ENCODE measurements at regions of chr17 and their contacts with region 1.

Region 1: DNA sequence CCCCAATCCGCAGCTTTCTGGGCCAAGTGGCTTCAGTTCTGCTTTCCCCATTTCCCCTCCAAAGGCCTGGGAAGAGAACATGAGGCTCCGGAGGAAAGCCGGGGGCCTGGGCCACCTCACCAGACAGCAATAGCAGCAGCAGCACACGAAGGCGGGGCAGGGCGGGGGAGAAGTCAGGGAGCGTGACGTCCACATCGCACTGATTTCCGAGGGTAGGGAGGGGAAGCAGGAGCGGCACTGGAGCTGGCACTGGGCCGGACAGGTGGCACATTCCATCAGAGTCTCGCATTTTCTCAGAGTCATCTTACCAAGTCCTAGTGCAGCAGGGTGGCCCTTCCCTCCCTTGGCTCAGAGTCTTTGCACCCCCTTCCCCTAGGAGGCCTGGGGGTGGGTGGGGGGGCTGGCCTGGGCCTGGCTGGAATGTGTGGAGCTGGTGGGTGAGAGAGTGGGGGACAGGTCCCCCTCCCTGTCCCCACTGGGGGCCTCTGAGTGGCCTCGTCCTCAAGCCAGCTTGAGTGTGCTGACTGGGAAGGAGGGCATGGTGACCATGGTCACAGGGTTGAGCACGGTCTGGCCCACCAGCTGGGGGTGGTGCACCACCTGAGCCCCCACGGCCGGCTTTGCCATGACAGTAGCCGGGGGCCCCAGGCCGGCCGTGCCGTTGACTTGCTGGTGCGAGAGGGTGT is 14.3 kb downstream of the MNT start:
- DNase-seq: no peak
- H3K4me3 ChIP-seq: no peak overlapping the region
- H3K27ac ChIP-seq: no peak overlapping the region
- H3K4me1 ChIP-seq: peaks cover under 1% of the 10 kb centered on the region
- H3K27me3 ChIP-seq: no peaks in the 10 kb centered on the region
- CTCF ChIP-seq: no peak
- POLR2A ChIP-seq: no peak

Region 2: GRCh38 chr17:2369551-2370210 is 16.9 kb before region 1 on chr17:
- CTCF ChIA-PET with region 1: interaction called, 47 read pairs
- POLR2A ChIA-PET with region 1: no interaction called
- dilution Hi-C with region 1: no loop called
- intact Hi-C with region 1: no loop called
- DNase-seq: no peak
- H3K4me3 ChIP-seq: no peak overlapping the region
- H3K27ac ChIP-seq: no peak overlapping the region
- H3K4me1 ChIP-seq: peaks cover 6% of the 10 kb centered on the region
- H3K27me3 ChIP-seq: no peaks in the 10 kb centered on the region
- CTCF ChIP-seq: peak in 1 of 2 donors; percentile 2
- POLR2A ChIP-seq: no peak

Region 3: GRCh38 chr17:2401426-2402221 is 15.1 kb after region 1 on chr17:
- CTCF ChIA-PET with region 1: interaction called, 53 read pairs
- POLR2A ChIA-PET with region 1: interaction called, 4 read pairs
- dilution Hi-C with region 1: no loop called
- intact Hi-C with region 1: loop called (anchors 1 kb)
- DNase-seq: peak; percentile 100
- H3K4me3 ChIP-seq: peak overlapping the region; percentile 11 to 69 (median 51)
- H3K27ac ChIP-seq: peak overlapping the region; percentile 99
- H3K4me1 ChIP-seq: peaks cover 43% of the 10 kb centered on the region
- H3K27me3 ChIP-seq: no peaks in the 10 kb centered on the region
- CTCF ChIP-seq: no peak
- POLR2A ChIP-seq: no peak

Region 4: GRCh38 chr17:2406903-2407790 is 20.6 kb after region 1 on chr17:
- CTCF ChIA-PET with region 1: interaction called, 909 read pairs
- POLR2A ChIA-PET with region 1: no interaction called
- dilution Hi-C with region 1: no loop called
- intact Hi-C with region 1: no loop called
- DNase-seq: peak; percentile 84
- H3K4me3 ChIP-seq: no peak overlapping the region
- H3K27ac ChIP-seq: peak overlapping the region; percentile 74
- H3K4me1 ChIP-seq: peaks cover 33% of the 10 kb centered on the region
- H3K27me3 ChIP-seq: no peaks in the 10 kb centered on the region
- CTCF ChIP-seq: no peak
- POLR2A ChIP-seq: peak; percentile 41

Region 5: GRCh38 chr17:2421315-2422147 is 35.0 kb after region 1 on chr17:
- CTCF ChIA-PET with region 1: interaction called, 909 read pairs
- POLR2A ChIA-PET with region 1: interaction called, 12 read pairs
- dilution Hi-C with region 1: no loop called
- intact Hi-C with region 1: loop called (anchors 1 kb)
- DNase-seq: no peak
- H3K4me3 ChIP-seq: no peak overlapping the region
- H3K27ac ChIP-seq: no peak overlapping the region
- H3K4me1 ChIP-seq: no peaks in the 10 kb centered on the region
- H3K27me3 ChIP-seq: no peaks in the 10 kb centered on the region
- CTCF ChIP-seq: no peak
- POLR2A ChIP-seq: no peak

Region 6: DNA sequence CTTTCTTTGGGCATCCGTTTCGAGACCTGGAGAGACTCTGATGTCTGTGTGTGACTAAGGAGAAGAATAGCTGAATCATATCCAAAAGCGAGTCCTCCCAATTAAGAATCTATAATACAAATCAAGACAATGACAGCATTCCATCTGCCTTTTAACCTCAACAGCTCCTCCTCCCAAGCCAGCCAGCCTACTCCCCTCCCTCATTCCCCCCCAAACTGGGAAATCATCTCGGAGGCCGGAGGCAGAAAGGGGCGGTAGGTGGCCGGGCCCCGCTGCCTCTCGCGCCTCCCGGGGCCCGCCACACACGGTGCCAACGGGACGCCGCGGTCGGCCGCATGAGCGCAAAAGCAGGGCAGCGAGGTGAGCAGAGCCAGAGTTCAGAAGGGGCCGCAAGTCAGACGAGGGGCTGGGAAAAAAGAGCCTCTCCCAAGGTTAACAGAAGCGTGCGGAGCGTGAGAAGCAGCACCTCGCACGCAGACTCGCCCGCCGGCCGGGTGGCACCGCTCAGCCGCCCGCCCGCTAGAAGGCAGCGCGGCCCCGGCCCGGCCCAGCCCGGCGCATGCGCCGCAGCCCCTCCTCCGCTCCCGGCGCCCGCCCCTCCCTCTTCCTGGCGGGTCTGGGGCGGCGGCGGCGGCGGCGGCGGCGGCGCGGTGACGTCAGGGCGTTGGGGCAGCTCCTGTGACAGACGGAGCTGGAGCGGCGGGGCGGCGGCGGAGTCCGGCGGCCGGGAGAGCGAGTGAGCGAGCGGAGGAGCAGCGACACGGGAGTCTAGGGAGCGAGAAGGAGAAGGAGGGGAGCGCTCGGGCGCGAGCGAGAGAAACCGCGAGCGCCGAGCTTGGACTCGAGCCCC is 206.7 kb after region 1 on chr17 and contains the start of gene PAFAH1B1:
- CTCF ChIA-PET with region 1: no interaction called
- POLR2A ChIA-PET with region 1: no interaction called
- dilution Hi-C with region 1: no loop called
- intact Hi-C with region 1: no loop called
- DNase-seq: peak; percentile 90
- H3K4me3 ChIP-seq: peak within 1 kb of the TSS; percentile 95 to 100 (median 98)
- H3K27ac ChIP-seq: peak within 1 kb of the TSS; percentile 96
- H3K4me1 ChIP-seq: peaks cover 22% of the 10 kb centered on the region
- H3K27me3 ChIP-seq: no peaks in the 10 kb centered on the region
- CTCF ChIP-seq: no peak
- POLR2A ChIP-seq: peak; percentile 88
- total RNA-seq, gene PAFAH1B1: 153 and 158 TPM in 2 replicates

Region 7: GRCh38 chr17:2672026-2672425 is 285.5 kb after region 1 on chr17:
- CTCF ChIA-PET with region 1: interaction called, 26 read pairs
- POLR2A ChIA-PET with region 1: no interaction called
- dilution Hi-C with region 1: no loop called
- intact Hi-C with region 1: loop called (anchors 1 kb)
- DNase-seq: no peak
- H3K4me3 ChIP-seq: no peak overlapping the region
- H3K27ac ChIP-seq: no peak overlapping the region
- H3K4me1 ChIP-seq: no peaks in the 10 kb centered on the region
- H3K27me3 ChIP-seq: no peaks in the 10 kb centered on the region
- CTCF ChIP-seq: no peak
- POLR2A ChIP-seq: no peak